ENCODE measurements at regions of chr12 and their contacts with region 1.

Region 1: GRCh38 chr12:24972078-24972477 is 23.2 kb upstream of the BCAT1 start:
- DNase-seq: no peak
- CTCF ChIP-seq: no peak

Region 2: GRCh38 chr12:24872211-24872610 is 99.9 kb before region 1 on chr12:
- CTCF ChIA-PET with region 1: no interaction called
- POLR2A ChIA-PET with region 1: no interaction called
- DNase-seq: no peak
- CTCF ChIP-seq: no peak

Region 3: GRCh38 chr12:24960222-24960855 is 11.7 kb before region 1 on chr12:
- CTCF ChIA-PET with region 1: interaction called, 15 read pairs
- POLR2A ChIA-PET with region 1: no interaction called
- DNase-seq: peak; percentile 36
- CTCF ChIP-seq: peak; percentile 70

Measured in GM10248 (cell line).